T-cell (primary cell): ENCODE measurements at regions of chr3 and their contacts with region 1.

Region 1: GRCh38 chr3:177300039-177300833 is 103.0 kb upstream of the TBL1XR1 start:
- DNase-seq: no peak
- ATAC-seq: no peak
- H3K4me3 ChIP-seq: no peak overlapping the region
- H3K4me3 Mint-ChIP-seq: no peak overlapping the region
- H3K27ac ChIP-seq: no peak overlapping the region
- H3K27ac Mint-ChIP-seq: no peak overlapping the region
- H3K4me1 ChIP-seq: no peaks in the 10 kb centered on the region
- H3K4me1 Mint-ChIP-seq: no peaks in the 10 kb centered on the region
- H3K27me3 ChIP-seq: no peaks in the 10 kb centered on the region
- H3K27me3 Mint-ChIP-seq: no peaks in the 10 kb centered on the region

Region 2: DNA sequence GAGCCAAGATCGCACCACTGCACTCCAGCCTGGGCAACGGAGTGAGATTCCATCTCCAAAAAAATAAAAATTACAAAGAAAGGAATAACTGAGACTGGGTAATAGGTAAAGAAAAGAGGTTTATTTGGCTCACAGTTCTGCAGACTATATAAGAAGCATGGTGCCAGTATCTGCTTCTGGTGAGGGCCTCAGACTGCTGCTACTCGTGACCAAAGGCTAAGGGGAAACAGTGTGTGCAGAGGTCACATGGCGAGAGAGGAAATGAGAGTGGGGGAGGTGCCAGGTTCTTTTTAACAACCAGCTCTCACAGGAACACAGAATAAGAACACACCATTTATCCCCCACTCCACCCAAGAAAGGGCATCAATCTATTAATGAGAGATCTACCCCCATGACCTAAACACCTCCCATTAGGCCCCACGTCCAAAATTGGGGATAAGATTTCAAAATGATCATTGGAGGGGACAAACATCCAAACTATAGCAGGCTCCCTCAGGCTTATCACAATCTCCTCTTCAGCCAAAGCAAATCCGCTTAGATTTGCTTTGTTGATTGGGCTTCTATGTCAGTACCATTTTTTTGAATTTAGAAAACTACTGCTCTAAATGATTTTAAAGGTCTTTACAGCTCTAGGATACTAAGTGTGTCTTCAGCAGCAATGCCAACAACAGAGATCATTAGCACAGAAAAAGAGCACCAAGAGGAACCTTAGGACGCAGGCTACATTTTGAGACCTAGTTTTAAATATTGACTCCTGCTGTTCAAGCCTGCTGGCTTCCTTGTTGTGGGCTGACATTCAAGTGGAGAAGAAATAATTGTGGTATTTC is 18.7 kb before region 1 on chr3:
- CTCF ChIA-PET with region 1: no interaction called
- POLR2A ChIA-PET with region 1: no interaction called
- DNase-seq: peak in 2 of 35 experiments; percentile 14
- ATAC-seq: peak in 3 of 4 experiments; percentile 23 to 64 (median 64)
- H3K4me3 ChIP-seq: no peak overlapping the region
- H3K4me3 Mint-ChIP-seq: peak overlapping the region in 1 of 3 donors; percentile 46
- H3K27ac ChIP-seq: no peak overlapping the region
- H3K27ac Mint-ChIP-seq: peak overlapping the region; percentile 66 to 78
- H3K4me1 ChIP-seq: peaks cover 7 to 16% of the 10 kb centered on the region in 2 experiments
- H3K4me1 Mint-ChIP-seq: peaks cover 26 to 28% (median 27%) of the 10 kb centered on the region in 3 donors
- H3K27me3 ChIP-seq: no peaks in the 10 kb centered on the region
- H3K27me3 Mint-ChIP-seq: no peaks in the 10 kb centered on the region

Region 3: GRCh38 chr3:177345049-177345972 is 45.1 kb after region 1 on chr3:
- CTCF ChIA-PET with region 1: no interaction called
- POLR2A ChIA-PET with region 1: interaction called in 1 of 2 experiments, 10 read pairs
- DNase-seq: peak in 8 of 35 experiments; percentile 4 to 43 (median 28)
- ATAC-seq: peak; percentile 52 to 93 (median 84)
- H3K4me3 ChIP-seq: no peak overlapping the region
- H3K4me3 Mint-ChIP-seq: peak overlapping the region in 2 of 3 donors; percentile 10 to 28
- H3K27ac ChIP-seq: no peak overlapping the region
- H3K27ac Mint-ChIP-seq: peak overlapping the region; percentile 28 to 47
- H3K4me1 ChIP-seq: peaks cover 7 to 12% of the 10 kb centered on the region in 2 experiments
- H3K4me1 Mint-ChIP-seq: peaks cover 15 to 22% (median 18%) of the 10 kb centered on the region in 3 donors
- H3K27me3 ChIP-seq: no peaks in the 10 kb centered on the region
- H3K27me3 Mint-ChIP-seq: no peaks in the 10 kb centered on the region